Esophagus muscularis mucosa (tissue), 4 donors: ENCODE measurements at regions of chr2 and their contacts with region 1.

Region 1: DNA sequence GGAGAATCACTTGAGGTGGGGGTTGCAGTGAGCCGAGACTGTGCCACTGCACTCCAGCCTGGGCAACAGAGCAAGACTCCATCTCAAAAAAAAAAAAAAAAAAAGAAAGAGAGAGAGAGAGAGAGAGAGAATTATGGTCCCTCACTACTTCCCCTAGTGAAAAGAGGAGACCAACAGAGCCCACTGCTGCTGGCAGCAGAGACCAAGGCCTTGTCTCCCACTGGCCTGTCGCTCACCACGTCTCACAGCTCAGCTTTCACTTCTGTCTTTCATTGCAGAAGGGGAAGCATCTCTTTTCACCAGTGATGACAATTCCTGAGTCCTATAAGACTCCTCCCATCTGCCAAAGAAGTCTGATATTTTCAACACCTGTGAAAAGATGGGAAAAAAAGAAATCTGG is 81.3 kb downstream of the CLHC1 start:
- DNase-seq: no peak
- H3K4me3 ChIP-seq: no peak overlapping the region
- H3K27ac ChIP-seq: no peak overlapping the region
- H3K4me1 ChIP-seq: peaks cover 12 to 58% (median 50%) of the 10 kb centered on the region in 4 donors
- H3K27me3 ChIP-seq: no peaks in the 10 kb centered on the region
- CTCF ChIP-seq: no peak
- EP300 ChIP-seq: no peak
- POLR2A ChIP-seq: no peak

Region 2: DNA sequence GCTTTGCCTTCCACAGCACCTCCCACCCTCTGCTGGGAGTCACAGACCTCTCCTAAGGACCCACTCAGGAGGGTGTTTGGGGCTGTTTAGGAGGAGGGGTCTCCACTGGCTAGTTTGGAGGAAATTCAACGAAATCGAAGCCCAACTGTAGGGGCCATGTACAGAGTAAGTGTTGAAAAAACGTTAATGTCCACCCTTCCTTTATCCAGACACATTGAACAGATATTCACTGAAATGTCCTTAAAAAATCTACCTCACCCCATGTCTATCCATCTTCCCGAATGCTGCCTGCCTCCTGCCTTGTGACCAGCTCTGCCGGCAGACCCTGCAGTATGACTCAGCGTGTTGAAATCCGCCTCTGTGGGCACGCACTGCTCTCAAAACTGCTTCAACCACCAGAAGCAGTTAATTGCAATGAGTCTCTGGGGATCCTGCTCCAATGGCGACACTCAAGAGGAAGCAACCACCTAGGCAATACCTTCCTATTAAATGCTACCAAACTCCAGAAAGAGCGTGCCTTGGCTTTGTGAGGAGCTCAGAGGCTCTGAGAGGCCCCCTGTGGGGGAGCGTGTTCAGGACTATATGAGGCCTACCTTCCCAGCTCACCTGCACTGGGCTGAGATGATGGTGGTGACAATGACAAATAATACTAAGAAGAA is 39.1 kb before region 1 on chr2:
- intact Hi-C with region 1: loop called (anchors 5 kb)
- DNase-seq: no peak
- H3K4me3 ChIP-seq: peak overlapping the region in 3 of 4 donors; percentile 15 to 19 (median 15)
- H3K27ac ChIP-seq: peak overlapping the region; percentile 88 to 91 (median 90)
- H3K4me1 ChIP-seq: peaks cover 24 to 88% (median 76%) of the 10 kb centered on the region in 4 donors
- H3K27me3 ChIP-seq: no peaks in the 10 kb centered on the region
- CTCF ChIP-seq: no peak
- EP300 ChIP-seq: no peak
- POLR2A ChIP-seq: no peak